Heart right ventricle (tissue), 16 donors: ENCODE measurements at regions of chr11 and their contacts with region 1.

Region 1: GRCh38 chr11:66344550-66345315 is at the start of gene BRMS1:
- DNase-seq: peak; percentile 98 to 99
- ATAC-seq: peak; percentile 84 to 96 (median 92)
- H3K4me3 ChIP-seq: peak within 1 kb of the TSS; percentile 81 to 100 (median 94)
- H3K27ac ChIP-seq: peak within 1 kb of the TSS in 9 of 10 donors; percentile 61 to 88 (median 84)
- H3K4me1 ChIP-seq: peaks cover 16 to 48% (median 39%) of the 10 kb centered on the region in 9 donors
- H3K27me3 ChIP-seq: peaks cover 0 to 5% (median 0%) of the 10 kb centered on the region in 7 donors
- CTCF ChIP-seq: peak in 4 of 9 donors; percentile 14 to 33 (median 20)
- total RNA-seq, gene BRMS1: 10.6 to 17.6 (median 12.9) TPM

Region 2: DNA sequence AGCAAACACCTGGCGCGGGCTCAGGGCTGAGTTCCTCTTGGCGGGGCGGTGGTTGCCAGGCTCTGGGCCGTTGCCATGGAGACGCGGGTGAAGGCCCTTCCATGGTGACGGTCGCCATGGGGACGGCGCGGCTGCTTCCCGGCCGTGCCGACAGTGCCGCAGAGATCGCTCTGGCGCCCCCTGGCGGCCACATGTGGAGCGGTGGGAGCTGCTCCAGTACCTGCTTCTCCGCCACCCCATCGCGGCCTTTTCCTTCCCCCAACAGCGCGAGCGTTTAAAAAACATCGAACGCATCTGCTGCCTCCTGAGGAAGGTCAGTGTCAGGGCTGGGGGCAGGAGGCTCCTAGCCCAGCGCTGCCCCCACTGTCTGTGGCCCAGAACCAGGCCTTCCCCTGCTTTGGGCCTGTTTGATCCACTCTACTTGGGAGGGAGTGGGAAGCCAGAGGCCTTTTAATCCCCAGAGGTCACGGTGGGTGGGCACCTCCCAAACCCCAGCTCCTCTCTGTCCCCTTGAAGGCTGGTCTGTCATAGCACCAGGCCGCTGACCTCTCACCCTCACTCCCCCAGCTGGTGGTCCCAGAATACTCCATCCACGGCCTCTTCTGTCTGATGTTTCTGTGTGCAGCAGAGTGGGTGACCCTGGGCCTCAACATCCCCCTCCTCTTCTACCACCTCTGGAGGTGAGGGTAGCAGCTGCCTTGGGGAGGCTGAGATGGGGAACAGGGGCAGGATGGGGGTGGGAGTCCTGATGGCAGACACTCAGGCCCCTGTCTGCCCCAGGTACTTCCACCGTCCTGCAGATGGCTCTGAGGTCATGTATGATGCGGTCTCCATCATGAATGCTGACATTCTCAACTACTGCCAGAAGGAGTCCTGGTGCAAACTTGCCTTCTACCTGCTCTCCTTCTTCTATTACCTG is 62.0 kb before region 1 on chr11:
- intact Hi-C with region 1: no loop called
- DNase-seq: peak; percentile 96 to 98
- ATAC-seq: peak; percentile 80 to 94 (median 88)
- H3K4me3 ChIP-seq: no peak overlapping the region
- H3K27ac ChIP-seq: peak overlapping the region in 2 of 10 donors; percentile 0 to 21
- H3K4me1 ChIP-seq: peaks cover 5 to 56% (median 28%) of the 10 kb centered on the region in 9 donors
- H3K27me3 ChIP-seq: peaks cover 0 to 6% (median 0%) of the 10 kb centered on the region in 7 donors
- CTCF ChIP-seq: peak; percentile 83 to 99 (median 99)

Region 3: DNA sequence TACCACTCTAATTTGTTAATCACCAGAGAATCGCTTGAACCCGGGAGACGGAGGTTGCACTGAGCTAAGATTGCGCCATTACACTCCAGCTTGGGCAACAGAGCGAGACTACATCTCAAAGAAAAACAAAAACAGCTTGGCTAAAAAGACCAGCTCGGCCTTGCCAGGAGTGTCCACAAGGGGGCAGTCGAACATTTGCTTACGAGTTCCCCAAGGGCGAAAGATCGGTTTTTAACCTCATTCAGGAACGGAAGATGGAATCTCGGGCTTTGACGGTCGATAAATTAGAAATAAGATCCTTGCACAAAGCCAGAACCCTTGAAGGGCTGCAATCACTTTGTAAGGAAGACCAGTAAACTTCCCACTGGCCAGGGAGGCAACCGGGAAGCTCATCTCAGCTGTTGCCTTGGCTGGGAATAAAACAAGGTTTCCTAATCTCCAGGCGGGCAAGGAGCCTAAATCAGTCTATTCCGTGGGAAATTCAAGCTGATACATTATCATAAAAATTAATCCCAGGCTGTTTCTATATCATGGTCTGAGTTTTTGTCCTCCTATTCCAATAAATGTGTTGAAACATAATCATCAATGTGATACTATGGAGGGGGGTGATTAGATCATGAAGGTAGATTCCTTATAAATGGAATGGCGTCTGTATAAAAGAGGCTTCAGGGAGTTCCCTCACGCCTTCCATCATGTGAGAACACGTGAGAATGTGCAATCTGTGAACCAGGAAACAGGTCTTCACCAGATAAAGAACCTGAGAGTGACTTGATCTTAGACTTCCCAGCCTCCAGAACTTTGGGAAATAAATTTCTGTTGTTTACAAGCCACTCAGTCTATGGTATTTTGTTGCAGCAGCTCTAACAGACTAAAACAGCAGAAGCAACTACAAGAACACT is 41.7 kb after region 1 on chr11:
- intact Hi-C with region 1: loop called in 3 of 10 experiments (anchors 5 kb)
- DNase-seq: peak; percentile 79 to 82
- ATAC-seq: peak in 7 of 8 donors; percentile 49 to 78 (median 65)
- H3K4me3 ChIP-seq: peak overlapping the region in 7 of 10 donors; percentile 6 to 47 (median 17)
- H3K27ac ChIP-seq: peak overlapping the region in 1 of 10 donors; percentile 1
- H3K4me1 ChIP-seq: peaks cover 0 to 14% (median 8%) of the 10 kb centered on the region in 9 donors
- H3K27me3 ChIP-seq: peaks cover 0 to 15% (median 0%) of the 10 kb centered on the region in 7 donors
- CTCF ChIP-seq: peak; percentile 78 to 97 (median 94)